ENCODE measurements at regions of chr7 and their contacts with region 1.

Region 1: GRCh38 chr7:131945313-131945911 is 389.0 kb upstream of the PODXL start:
- DNase-seq: peak in 1 of 2 donors; percentile 81
- H3K4me3 ChIP-seq: peak overlapping the region; percentile 46 to 54
- H3K27ac ChIP-seq: no peak overlapping the region
- H3K4me1 ChIP-seq: peaks cover 16 to 32% of the 10 kb centered on the region in 2 donors
- H3K27me3 ChIP-seq: no peaks in the 10 kb centered on the region
- CTCF ChIP-seq: peak; percentile 82 to 99 (median 95)

Region 2: GRCh38 chr7:132019703-132020102 is 74.3 kb after region 1 on chr7:
- intact Hi-C with region 1: loop called (anchors 5 kb)
- DNase-seq: no peak
- H3K4me3 ChIP-seq: no peak overlapping the region
- H3K27ac ChIP-seq: peak overlapping the region; percentile 12 to 54
- H3K4me1 ChIP-seq: peaks cover 0 to 6% of the 10 kb centered on the region in 2 donors
- H3K27me3 ChIP-seq: no peaks in the 10 kb centered on the region
- CTCF ChIP-seq: no peak

Region 3: GRCh38 chr7:132035600-132036362 is 90.4 kb after region 1 on chr7:
- intact Hi-C with region 1: loop called (anchors 5 kb)
- DNase-seq: peak in 1 of 2 donors; percentile 72
- H3K4me3 ChIP-seq: no peak overlapping the region
- H3K27ac ChIP-seq: peak overlapping the region in 1 of 2 donors; percentile 55
- H3K4me1 ChIP-seq: peaks cover 0 to 2% of the 10 kb centered on the region in 2 donors
- H3K27me3 ChIP-seq: no peaks in the 10 kb centered on the region
- CTCF ChIP-seq: no peak

Region 4: GRCh38 chr7:132145466-132145865 is 200.1 kb after region 1 on chr7:
- intact Hi-C with region 1: loop called (anchors 1 kb)
- DNase-seq: peak; percentile 51 to 88
- H3K4me3 ChIP-seq: no peak overlapping the region
- H3K27ac ChIP-seq: peak overlapping the region; percentile 60 to 66
- H3K4me1 ChIP-seq: peaks cover 0 to 23% of the 10 kb centered on the region in 2 donors
- H3K27me3 ChIP-seq: no peaks in the 10 kb centered on the region
- CTCF ChIP-seq: peak in 2 of 3 experiments; percentile 8 to 30

Region 5: DNA sequence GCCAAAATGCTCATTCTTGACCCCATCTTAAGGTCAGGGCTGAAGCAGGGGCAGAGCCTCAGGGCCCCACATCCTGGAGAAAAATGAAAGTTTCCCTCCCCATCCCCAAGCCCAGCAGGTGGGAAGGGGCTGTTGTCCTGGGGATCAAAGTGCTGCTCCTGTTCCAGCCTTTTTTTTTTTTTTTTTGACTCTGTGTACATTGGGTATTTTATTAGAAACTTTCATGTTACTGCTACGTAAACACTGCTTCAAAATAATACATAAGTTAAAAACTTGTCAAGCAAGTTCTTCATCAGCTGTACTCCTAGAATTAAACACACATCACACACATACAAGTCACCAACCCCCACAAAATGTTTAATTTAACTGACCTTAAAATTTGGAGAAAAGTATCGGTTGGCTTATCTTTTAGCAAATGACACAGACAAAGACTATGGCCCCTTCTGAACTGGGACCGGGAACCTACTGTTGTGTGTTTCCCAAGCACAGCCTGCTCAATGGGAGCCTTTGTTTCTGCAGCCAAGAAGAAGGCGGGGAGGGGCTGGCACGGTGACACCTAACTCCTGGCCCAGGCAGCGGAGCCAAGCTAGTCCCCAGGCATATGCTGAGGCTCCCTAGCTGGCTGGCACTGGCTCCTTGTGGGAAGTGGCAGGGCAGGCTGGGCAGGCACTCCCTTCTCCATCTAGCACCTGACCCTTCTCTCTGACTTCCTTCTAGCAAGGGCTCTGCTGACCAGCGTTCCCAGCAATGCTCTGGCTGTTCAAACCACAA is 305.7 kb after region 1 on chr7:
- intact Hi-C with region 1: loop called (anchors 5 kb)
- DNase-seq: peak; percentile 38 to 82
- H3K4me3 ChIP-seq: no peak overlapping the region
- H3K27ac ChIP-seq: peak overlapping the region in 1 of 2 donors; percentile 6
- H3K4me1 ChIP-seq: peaks cover 3 to 19% of the 10 kb centered on the region in 2 donors
- H3K27me3 ChIP-seq: no peaks in the 10 kb centered on the region
- CTCF ChIP-seq: no peak

Region 6: GRCh38 chr7:132318352-132319318 is 373.2 kb after region 1 on chr7:
- intact Hi-C with region 1: loop called (anchors 5 kb)
- DNase-seq: peak; percentile 21 to 89
- H3K4me3 ChIP-seq: no peak overlapping the region
- H3K27ac ChIP-seq: no peak overlapping the region
- H3K4me1 ChIP-seq: peaks cover 0 to 7% of the 10 kb centered on the region in 2 donors
- H3K27me3 ChIP-seq: no peaks in the 10 kb centered on the region
- CTCF ChIP-seq: peak; percentile 82 to 92 (median 88)